GM12878 (cell line): ENCODE measurements at regions of chr12 and their contacts with region 1.

Region 1: DNA sequence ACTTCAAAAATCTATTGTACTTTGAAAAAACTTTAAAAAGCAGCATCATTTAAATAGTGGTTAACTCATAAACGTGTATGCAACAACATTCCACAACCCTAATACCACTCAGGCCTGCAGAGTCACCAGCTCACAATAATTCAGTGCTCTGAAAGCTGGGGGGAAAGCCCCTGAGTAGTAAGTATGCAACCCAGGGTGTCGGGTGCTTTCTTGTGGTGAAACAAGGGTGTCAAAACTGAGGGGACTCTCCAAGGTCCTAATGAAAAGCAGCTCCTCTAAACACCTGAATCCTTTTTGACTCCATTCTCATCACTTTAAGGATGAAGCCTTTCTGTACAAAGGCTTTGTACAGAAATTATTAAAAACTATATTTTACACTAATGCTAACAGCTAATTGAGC is 33.7 kb downstream of the FGFR1OP2 start:
- DNase-seq: peak; percentile 72
- ATAC-seq: peak; percentile 100
- H3K4me3 ChIP-seq: no peak overlapping the region
- H3K27ac ChIP-seq: peak overlapping the region; percentile 35; the same call in 1 of the 2 replicates
- H3K4me1 ChIP-seq: peaks cover 7% of the 10 kb centered on the region
- H3K27me3 ChIP-seq: no peaks in the 10 kb centered on the region
- CTCF ChIP-seq: peak in 1 of 3 experiments; percentile 35; a peak in 2 of 6 replicates
- EP300 ChIP-seq: peak; percentile 37 to 65; a peak in 2 of 4 replicates
- POLR2A ChIP-seq: no peak
- RAD21 ChIP-seq: peak; percentile 43; the same call in 1 of the 2 replicates

Region 2: DNA sequence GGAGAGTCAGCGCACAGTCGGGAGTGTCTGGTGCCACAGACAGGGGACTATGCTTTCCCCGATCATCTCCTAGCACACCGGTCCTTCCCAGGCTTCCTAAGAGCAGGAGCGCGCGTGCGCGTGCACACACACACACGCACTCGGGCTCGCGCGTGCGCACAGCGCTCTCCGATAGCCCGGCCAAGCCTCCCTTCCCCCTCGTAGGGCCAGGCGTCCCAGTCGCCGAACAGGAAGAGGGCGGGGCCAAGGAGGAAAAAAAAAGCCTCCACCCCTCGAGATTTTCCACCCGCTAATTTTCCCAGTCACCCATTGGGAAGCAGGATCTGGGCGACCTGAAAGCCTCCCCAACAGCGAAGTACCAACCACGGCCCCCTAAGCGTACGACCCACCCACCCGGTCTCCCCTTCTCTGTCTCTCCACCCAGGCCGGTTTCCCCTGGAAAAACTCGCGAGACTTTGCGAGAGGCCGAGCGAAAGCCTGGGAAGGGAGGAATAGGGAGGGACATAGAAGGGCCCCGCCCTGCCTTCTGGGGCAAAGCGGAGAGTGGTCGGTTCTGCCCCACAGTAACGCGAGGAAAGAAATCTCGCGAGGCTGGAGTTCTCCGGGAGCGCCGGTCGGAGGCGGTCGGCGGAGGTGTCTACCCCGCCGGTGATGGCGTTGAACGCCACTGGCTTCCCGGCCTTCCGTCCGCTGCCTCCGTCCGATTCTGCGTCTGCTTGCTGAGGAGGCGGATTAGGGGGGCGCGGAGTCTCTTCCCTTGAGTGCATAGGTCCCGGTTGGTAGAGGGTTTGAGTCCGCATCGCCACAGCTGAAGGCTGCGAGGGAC is 33.9 kb before region 1 on chr12 and contains the starts of genes FGFR1OP2 and INTS13:
- CTCF ChIA-PET with region 1: interaction called, 5 read pairs
- POLR2A ChIA-PET with region 1: interaction called, 6 read pairs
- RAD21 ChIA-PET with region 1: interaction called, 11 read pairs
- SMC1A ChIA-PET with region 1: interaction called, 13 read pairs
- in situ Hi-C with region 1: no loop called
- intact Hi-C with region 1: no loop called
- DNase-seq: peak; percentile 95
- ATAC-seq: peak; percentile 87
- H3K4me3 ChIP-seq: peak within 1 kb of the TSS; percentile 99
- H3K27ac ChIP-seq: peak within 1 kb of the TSS; percentile 94
- H3K4me1 ChIP-seq: peaks cover 5% of the 10 kb centered on the region
- H3K27me3 ChIP-seq: no peaks in the 10 kb centered on the region
- CTCF ChIP-seq: no peak
- EP300 ChIP-seq: peak in 1 of 2 experiments; percentile 27; a peak in 1 of 4 replicates
- POLR2A ChIP-seq: peak; percentile 97
- RAD21 ChIP-seq: no peak
- polyA plus RNA-seq, gene FGFR1OP2: 29.0 to 32.2 TPM
- polyA plus RNA-seq, gene INTS13: 43.4 to 65.4 TPM

Region 3: DNA sequence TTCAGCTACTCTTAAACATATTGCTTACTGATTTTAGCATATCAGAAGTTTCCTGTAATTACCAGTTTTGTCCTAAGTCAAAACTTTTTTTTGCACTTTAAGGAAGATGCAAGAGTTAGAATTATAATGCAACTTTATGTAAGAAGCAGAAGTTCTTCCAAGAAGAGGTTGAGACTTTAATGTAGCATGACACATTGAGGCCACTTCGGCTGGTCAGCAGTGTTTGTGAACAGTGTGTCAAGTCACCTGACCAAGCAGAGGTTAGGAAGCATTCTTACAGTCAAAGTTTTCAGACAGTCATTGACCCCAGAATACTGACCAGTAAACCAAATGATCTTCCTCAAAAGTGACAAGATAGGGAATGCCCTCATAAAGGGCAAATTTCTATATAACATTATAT is 18.5 kb before region 1 on chr12:
- CTCF ChIA-PET with region 1: interaction called, 6 read pairs
- POLR2A ChIA-PET with region 1: interaction called, 3 read pairs
- RAD21 ChIA-PET with region 1: interaction called, 3 read pairs
- SMC1A ChIA-PET with region 1: interaction called, 10 read pairs
- in situ Hi-C with region 1: no loop called
- intact Hi-C with region 1: no loop called
- DNase-seq: no peak
- ATAC-seq: peak; percentile 46
- H3K4me3 ChIP-seq: no peak overlapping the region
- H3K27ac ChIP-seq: no peak overlapping the region
- H3K4me1 ChIP-seq: no peaks in the 10 kb centered on the region
- H3K27me3 ChIP-seq: no peaks in the 10 kb centered on the region
- CTCF ChIP-seq: no peak
- EP300 ChIP-seq: no peak
- POLR2A ChIP-seq: no peak
- RAD21 ChIP-seq: no peak

Region 4: DNA sequence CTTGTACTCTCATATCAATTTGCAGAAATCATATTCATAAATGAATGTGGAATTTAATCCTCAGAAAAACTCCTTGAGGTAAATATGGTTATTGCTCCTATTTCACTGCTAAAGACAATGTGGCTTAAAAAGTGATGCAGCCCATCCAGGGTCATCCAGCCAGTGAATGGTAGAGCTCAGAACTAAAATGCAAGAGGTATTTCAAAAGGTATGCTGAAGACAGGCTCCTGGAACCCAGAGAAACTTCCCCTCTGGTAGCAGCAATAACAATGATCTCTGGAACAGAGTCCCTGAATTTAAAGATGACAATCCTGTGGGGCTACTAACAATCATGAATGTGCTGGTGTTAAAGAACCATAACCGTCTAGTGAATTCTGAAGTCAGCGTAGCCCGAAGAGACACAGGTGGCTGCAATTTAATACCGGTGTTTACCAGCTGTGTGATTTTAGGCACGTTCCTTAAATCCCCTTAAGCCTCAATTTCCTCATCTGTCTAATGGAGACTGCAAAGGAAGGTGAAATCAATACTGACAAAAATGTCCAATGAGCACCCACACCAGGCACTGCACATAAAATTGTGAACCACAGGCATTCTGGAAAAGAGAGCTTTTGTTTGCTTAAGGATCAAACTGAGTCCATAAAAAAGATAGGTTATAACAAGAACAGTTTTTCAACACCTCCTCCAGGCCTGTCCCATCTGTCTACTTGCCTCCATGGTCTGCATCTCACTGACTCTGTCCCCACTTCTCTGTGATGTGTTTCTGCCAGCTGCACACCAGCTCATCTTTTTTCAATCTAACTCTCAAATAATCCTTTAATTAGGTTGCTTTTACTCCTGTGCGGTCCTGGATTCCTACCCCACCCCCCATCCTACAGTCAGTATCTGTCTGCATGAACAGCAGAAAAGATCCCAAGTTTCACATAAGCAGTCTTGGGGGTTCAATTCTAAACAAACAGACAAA is 31.7 kb after region 1 on chr12:
- CTCF ChIA-PET with region 1: interaction called, 3 read pairs
- POLR2A ChIA-PET with region 1: interaction called, 4 read pairs
- RAD21 ChIA-PET with region 1: interaction called, 25 read pairs
- SMC1A ChIA-PET with region 1: interaction called, 11 read pairs
- in situ Hi-C with region 1: no loop called
- intact Hi-C with region 1: no loop called
- DNase-seq: no peak
- ATAC-seq: peak; percentile 27
- H3K4me3 ChIP-seq: 0 out of 2 replicates have a peak overlapping the region, but pooled peaks have one; percentile 17
- H3K27ac ChIP-seq: no peak overlapping the region
- H3K4me1 ChIP-seq: no peaks in the 10 kb centered on the region
- H3K27me3 ChIP-seq: no peaks in the 10 kb centered on the region
- CTCF ChIP-seq: no peak
- EP300 ChIP-seq: no peak
- POLR2A ChIP-seq: no peak
- RAD21 ChIP-seq: no peak